ENCODE measurements at regions of chr5 and their contacts with region 1.

Region 1: DNA sequence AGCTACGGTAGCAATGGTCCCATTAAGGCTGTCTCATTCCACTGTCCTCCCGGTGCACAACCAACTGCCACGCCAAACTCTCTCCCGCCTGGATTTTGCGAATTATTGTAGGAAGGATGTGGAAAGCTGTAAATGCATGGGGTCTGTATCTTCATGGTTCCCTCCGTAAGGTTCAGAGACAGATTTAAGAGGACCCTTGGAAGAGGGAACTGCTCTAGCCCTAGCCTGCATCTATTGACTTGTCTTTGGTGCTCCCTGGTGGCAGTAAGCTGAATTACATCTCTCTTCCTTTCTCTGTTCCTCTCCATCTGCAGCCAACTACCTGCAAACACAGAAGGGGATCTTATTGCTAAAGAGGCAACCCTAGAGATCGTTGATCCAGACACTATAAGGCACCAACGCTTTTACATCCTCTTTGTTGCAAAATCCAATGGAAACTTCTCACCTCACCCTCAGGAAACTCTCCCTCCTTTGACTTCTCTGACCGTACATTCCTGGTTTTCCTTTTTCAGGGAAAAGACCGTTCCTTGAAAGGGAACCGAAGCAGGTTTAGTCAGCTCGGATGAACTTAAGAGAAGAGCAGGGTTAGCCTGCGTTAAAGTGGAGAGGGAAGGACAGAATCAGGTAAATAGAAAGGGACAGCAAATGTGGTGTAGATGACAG is 11.9 kb downstream of the CAPSL start:
- DNase-seq: peak; percentile 76
- H3K4me3 Mint-ChIP-seq: no peak overlapping the region
- H3K27ac Mint-ChIP-seq: no peak overlapping the region
- H3K4me1 Mint-ChIP-seq: peaks cover 40% of the 10 kb centered on the region
- H3K27me3 Mint-ChIP-seq: peaks cover 5% of the 10 kb centered on the region

Region 2: GRCh38 chr5:35617435-35618303 is 308.9 kb before region 1 on chr5 and contains the start of gene SPEF2:
- CTCF ChIA-PET with region 1: interaction called, 26 read pairs
- DNase-seq: peak; percentile 84
- H3K4me3 Mint-ChIP-seq: peak within 1 kb of the TSS; percentile 92
- H3K27ac Mint-ChIP-seq: peak within 1 kb of the TSS; percentile 90
- H3K4me1 Mint-ChIP-seq: peaks cover 27% of the 10 kb centered on the region
- H3K27me3 Mint-ChIP-seq: peaks cover 7% of the 10 kb centered on the region

Region 3: DNA sequence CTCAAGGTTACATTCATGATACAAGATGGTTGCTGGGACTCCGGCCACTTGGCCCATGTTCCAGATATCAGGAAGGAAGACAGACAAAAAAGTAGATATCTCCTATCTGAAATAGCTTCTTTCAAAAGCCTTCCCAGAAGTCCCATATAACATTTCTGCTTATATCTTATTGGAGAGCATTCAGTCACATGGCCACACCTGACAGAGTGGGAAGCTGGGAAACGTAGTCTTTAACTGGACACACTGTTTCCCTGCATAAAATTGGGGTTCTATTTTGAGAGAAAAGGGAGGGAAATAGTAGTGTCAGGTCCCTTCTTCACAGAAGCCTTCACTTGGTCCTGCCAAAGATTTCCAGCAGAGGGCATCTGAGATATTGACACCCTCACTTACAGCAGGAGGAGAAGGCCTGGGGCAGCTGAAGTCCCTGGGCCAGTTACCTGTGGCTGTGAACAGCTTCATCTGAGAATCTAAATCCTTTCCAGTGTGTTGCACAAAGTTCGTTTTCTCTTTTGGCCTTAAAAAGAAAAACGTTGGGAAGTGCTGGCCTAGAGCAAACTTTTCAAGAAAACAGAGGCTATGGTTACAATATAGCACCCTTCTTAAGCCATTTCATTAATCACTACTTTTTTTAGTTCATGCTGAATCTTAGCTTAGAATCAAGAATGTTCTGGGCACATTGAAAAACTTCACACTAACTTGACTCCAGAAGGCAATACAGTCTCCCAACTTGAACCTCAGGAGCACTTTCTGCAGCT is 275.3 kb before region 1 on chr5:
- CTCF ChIA-PET with region 1: interaction called, 209 read pairs
- DNase-seq: peak; percentile 78
- H3K4me3 Mint-ChIP-seq: no peak overlapping the region
- H3K27ac Mint-ChIP-seq: no peak overlapping the region
- H3K4me1 Mint-ChIP-seq: no peaks in the 10 kb centered on the region
- H3K27me3 Mint-ChIP-seq: no peaks in the 10 kb centered on the region

Region 4: DNA sequence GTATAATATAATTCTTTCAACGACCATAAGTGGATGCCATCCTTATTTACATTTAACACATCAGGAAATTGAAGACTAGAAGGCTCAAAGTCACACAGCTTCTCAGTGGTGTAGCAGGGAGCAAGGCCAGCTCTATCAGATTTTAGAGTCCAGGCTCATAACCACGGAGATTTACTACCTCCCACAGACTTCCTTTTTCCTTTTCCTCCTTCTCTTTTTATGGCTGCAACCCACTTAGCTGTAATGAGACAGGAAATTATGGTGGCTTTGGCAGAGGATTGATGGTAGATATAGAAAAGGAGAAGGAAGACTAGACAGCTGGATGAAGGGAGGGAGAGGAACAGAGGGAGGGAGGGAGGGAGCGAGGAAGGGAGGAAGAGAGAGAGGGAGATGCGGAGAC is 261.4 kb before region 1 on chr5:
- CTCF ChIA-PET with region 1: interaction called, 21 read pairs
- DNase-seq: no peak
- H3K4me3 Mint-ChIP-seq: no peak overlapping the region
- H3K27ac Mint-ChIP-seq: peak overlapping the region; percentile 29
- H3K4me1 Mint-ChIP-seq: peaks cover 38% of the 10 kb centered on the region
- H3K27me3 Mint-ChIP-seq: no peaks in the 10 kb centered on the region

Region 5: GRCh38 chr5:35863159-35863558 is 63.4 kb before region 1 on chr5:
- CTCF ChIA-PET with region 1: interaction called, 17 read pairs
- DNase-seq: peak; percentile 45
- H3K4me3 Mint-ChIP-seq: peak overlapping the region; percentile 90
- H3K27ac Mint-ChIP-seq: peak overlapping the region; percentile 88
- H3K4me1 Mint-ChIP-seq: peaks cover 76% of the 10 kb centered on the region
- H3K27me3 Mint-ChIP-seq: no peaks in the 10 kb centered on the region

Region 6: GRCh38 chr5:35902046-35902676 is 24.4 kb before region 1 on chr5:
- CTCF ChIA-PET with region 1: interaction called, 10 read pairs
- DNase-seq: peak; percentile 58
- H3K4me3 Mint-ChIP-seq: no peak overlapping the region
- H3K27ac Mint-ChIP-seq: peak overlapping the region; percentile 77
- H3K4me1 Mint-ChIP-seq: peaks cover 77% of the 10 kb centered on the region
- H3K27me3 Mint-ChIP-seq: no peaks in the 10 kb centered on the region

Region 7: DNA sequence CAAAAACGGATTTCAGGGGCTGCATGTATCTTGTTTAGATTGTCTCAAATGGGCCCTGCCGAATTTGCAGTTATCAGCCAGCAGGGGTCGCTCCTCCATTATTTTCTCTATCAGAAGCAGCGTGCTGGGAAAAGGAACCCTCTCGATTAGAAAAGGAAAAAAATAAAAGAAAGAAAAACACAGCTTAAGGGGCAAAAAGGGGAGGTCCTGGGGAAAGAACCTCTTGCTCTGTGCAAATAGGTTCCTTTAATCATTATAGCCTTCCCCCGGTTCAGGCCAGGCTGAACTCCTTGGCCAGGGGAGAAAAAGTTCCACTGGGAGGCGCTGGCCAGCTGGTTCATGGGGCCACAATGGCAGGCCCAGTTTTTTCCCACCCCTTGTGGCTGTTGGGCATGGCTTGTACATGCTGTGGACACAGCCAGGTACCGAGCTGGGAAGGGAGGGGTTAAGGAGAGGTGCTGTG is 36.9 kb after region 1 on chr5:
- CTCF ChIA-PET with region 1: no interaction called
- DNase-seq: no peak
- H3K4me3 Mint-ChIP-seq: no peak overlapping the region
- H3K27ac Mint-ChIP-seq: no peak overlapping the region
- H3K4me1 Mint-ChIP-seq: no peaks in the 10 kb centered on the region
- H3K27me3 Mint-ChIP-seq: peaks cover 20% of the 10 kb centered on the region

Region 8: DNA sequence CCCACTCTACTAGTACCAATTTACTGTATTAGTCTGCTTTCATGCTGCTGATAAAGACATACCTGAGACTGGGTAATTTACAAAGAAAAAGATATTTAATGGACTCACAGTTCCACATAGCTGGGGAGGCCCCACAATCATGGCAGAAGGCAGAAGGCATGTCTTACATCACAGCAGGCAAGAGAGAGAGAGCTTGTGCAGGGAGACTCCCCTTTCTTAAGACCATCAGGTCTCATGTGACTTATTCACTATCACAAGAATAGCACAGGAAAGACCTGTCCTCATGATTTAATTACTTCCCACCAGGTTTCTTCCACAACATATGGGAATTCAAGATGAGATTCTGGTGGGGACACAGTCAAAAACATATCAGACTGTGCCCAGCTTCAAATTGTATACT is 53.2 kb after region 1 on chr5:
- CTCF ChIA-PET with region 1: no interaction called
- DNase-seq: no peak
- H3K4me3 Mint-ChIP-seq: no peak overlapping the region
- H3K27ac Mint-ChIP-seq: no peak overlapping the region
- H3K4me1 Mint-ChIP-seq: no peaks in the 10 kb centered on the region
- H3K27me3 Mint-ChIP-seq: peaks cover 5% of the 10 kb centered on the region

Region 9: GRCh38 chr5:36403632-36404311 is 477.3 kb after region 1 on chr5:
- CTCF ChIA-PET with region 1: no interaction called
- DNase-seq: no peak
- H3K4me3 Mint-ChIP-seq: no peak overlapping the region
- H3K27ac Mint-ChIP-seq: no peak overlapping the region
- H3K4me1 Mint-ChIP-seq: no peaks in the 10 kb centered on the region
- H3K27me3 Mint-ChIP-seq: peaks cover 4% of the 10 kb centered on the region